ENCODE measurements at regions of chr10 and their contacts with region 1.

Region 1: GRCh38 chr10:79445141-79445976 is at the start of gene ZCCHC24:
- DNase-seq: peak; percentile 100
- total RNA-seq, gene ZCCHC24: 113 to 125 TPM

Region 2: DNA sequence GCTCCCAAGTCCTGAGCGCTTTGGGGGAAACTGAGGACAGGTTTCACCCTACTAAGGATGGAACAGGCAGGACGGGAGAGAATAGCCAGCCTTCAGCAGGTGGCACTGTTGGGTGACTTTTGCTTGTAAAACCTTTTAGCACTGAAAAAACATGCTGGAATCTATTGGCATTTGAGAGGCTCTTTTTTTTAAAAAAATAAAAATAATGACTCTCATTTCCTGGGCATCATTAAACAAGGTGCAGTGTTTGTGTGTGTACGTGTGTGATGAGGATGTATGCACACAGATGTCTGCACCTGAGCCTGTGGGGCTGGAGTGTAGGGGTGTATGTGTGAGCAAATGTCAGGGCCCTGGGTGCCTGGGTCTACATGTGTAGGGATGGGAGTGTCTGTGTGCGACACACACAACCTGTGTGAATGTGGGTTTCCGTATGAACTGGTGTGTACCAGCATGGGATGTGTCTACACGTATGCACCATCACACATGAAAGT is 1233.8 kb before region 1 on chr10:
- intact Hi-C with region 1: loop called in 1 of 2 experiments (anchors 5 kb)
- DNase-seq: peak; percentile 67

Region 3: DNA sequence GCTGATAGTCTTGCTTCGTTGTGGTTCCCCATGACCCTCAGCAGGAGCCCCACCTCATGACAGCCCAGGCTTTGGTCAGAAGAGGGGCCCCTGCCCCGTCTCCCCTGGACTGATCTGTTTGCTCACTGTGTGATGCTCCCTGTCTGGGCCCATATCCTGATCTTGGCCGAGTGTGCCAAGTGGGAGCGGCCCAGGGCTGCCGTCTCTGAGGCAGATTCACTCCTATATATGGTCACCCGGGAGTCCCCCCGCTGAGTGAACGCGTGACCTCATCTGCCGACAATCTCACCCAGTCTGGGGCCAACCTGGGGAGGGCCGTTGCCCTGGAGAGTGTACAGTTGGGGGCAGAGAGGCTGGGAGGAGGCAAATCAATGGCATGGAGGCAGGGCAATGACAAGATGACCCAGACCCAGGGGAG is 63.5 kb before region 1 on chr10:
- intact Hi-C with region 1: loop called in 1 of 2 experiments (anchors 5 kb)
- DNase-seq: peak; percentile 94

Region 4: DNA sequence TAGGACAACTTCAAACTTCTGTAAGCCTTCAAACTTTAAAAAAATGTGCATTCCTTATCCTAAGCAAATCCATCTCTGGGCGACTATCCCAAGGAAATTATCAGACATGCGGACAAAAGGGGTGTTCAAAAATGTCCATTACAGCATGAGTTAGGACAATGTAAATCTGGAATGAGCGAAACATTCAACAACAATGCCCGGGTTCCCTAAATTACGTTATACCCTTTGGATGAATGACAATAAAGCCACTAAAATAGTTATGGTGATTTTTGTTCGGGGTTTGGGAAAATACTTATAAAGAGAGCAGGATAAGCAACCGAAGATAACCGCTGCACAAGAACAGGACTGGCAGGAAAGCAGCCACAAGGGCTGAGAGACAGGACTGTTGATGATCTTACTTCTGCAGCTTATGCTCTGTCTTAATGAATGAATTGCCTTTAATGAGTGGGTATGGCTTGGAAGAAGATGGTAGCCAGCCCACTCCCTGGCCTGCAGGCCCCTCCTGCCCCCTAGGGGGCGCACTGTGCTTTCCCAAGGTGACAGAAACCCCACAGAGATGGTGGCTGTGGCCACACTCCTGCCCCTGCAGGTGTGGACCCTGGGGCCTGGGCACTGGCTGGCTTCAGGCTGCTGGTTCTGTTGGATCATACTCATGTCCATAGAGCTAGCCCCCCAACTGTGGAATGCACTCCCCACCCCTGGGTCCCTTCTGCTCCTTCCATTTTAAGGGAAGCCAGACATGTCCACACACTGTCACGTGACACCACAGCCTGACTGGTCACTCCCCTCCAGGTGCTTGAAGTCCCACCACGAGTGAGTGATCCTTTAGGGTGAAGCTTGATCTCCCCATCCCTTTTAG is 45.0 kb before region 1 on chr10:
- intact Hi-C with region 1: loop called in 1 of 2 experiments (anchors 5 kb)
- DNase-seq: no peak

Region 5: GRCh38 chr10:79487296-79488194 is 42.2 kb after region 1 on chr10:
- intact Hi-C with region 1: no loop called
- DNase-seq: peak; percentile 84